Ovary (tissue), 10 donors: ENCODE measurements at regions of chr10 and their contacts with region 1.

Region 1: DNA sequence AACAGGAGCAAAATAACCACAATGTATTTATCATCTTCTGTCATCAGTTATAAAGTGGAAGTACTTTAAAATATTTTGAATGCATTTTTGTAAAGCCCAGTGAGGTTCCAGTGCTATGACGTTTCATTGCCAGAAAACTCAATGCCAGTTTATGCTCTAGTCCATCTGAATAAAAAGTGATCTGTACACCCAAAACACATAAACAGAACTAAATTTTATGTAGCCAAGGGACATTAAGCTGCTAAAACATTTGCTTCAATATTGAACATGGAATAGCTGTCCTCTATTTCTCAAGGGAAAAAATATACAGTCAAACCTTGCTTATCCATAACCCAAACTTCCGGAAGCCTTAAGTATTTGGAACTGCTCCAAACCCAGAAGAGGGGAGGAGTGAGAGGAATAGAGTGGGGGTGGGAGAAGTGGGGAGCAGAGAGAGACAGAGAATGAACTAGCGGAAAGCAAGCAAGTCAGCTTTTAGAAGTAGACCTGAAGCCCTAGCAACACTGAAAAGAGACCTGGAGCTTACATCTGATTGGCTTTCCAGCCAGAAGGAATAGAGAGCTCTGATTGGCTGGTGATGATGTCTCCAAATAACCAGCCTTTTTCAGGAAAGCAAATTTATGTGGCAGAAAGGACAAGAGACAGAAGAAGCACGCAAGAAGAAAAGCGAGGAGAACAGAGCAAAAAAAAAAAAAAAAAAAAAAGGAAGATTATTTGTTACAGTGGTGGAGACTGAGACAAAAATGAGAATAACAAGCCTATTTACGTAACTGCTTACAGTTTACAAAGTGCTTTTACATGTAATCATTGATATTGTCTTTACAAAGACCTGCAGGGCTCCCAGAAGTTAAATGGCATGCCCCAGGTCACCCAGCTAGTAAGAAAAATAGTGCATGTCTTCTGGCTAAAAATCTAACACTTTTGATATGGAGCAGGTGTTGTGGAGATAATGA is 196.0 kb downstream of the RNLS start:
- DNase-seq: peak in 2 of 5 donors; percentile 16 to 30
- H3K4me3 ChIP-seq: no peak overlapping the region
- H3K27ac ChIP-seq: peak overlapping the region in 1 of 2 donors; percentile 4
- H3K4me1 ChIP-seq: peaks cover 5% of the 10 kb centered on the region
- H3K27me3 ChIP-seq: no peaks in the 10 kb centered on the region
- CTCF ChIP-seq: no peak
- EP300 ChIP-seq: no peak
- POLR2A ChIP-seq: no peak

Region 2: DNA sequence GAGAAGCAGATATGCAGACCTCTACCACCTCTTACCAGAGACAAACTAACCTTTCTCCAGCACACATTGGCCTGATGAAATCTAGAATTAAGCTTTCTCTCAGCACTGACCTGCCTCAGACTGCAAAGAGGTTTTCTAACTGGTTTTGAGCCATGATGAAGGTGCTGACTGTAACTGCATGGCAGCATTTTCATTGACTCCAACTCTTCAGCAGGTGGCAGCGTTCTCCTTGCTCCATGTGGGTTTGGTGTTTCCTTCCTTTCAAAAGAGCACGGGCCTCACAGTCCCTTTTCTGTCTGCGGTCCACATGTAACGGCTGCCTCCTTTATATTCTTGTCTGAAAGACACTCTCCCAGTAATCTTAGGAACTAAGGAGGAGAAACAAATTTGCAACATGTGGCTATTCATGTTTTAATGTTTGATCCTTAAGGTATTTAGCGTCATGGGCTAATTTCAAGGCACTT is 536.3 kb before region 1 on chr10:
- intact Hi-C with region 1: loop called in 1 of 4 experiments (anchors 10 kb)
- DNase-seq: peak; percentile 60 to 77 (median 62)
- H3K4me3 ChIP-seq: no peak overlapping the region
- H3K27ac ChIP-seq: no peak overlapping the region
- H3K4me1 ChIP-seq: no peaks in the 10 kb centered on the region
- H3K27me3 ChIP-seq: no peaks in the 10 kb centered on the region
- CTCF ChIP-seq: peak; percentile 33 to 80 (median 64)
- EP300 ChIP-seq: no peak
- POLR2A ChIP-seq: no peak

Region 3: DNA sequence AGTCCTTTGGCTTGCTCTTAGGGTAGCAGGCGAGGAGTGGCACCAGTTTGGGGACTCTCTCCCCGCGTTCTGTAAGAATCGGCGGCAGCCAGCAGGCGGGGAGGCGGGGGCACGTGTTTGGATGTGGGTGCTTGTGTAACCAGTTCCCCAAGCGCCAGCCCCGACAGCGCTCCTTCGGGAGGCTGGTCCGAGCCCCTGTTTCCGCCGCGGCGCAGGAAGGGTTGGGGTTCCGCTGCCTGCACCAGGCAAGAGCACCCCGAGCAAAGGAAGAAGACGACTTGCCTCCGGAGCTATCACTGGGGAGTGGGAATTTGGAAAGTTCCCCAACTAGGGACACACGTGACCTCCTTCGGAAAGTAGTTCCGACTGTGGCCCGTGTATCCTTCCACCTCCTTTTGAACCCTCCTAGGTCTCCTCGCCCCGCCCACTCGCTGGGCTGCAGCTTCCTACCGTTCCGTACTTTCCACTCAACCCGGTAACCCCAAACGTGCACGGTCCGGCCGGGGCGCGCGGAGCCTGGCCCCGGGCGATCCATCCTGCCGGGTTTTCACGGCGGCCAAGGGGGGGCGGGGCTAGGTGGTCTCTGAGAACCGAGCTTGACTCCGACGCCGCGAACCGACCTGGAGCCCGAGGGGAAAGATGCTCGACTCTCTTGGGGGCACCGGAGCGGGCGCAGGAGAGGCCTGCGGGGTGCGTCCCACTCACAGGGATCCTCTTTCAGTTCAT is 525.0 kb before region 1 on chr10:
- intact Hi-C with region 1: loop called in 3 of 4 experiments (anchors 5 to 10 kb)
- DNase-seq: peak; percentile 96 to 97 (median 97)
- H3K4me3 ChIP-seq: peak overlapping the region; percentile 54
- H3K27ac ChIP-seq: peak overlapping the region; percentile 93 to 97
- H3K4me1 ChIP-seq: peaks cover 2% of the 10 kb centered on the region
- H3K27me3 ChIP-seq: no peaks in the 10 kb centered on the region
- CTCF ChIP-seq: no peak
- EP300 ChIP-seq: no peak
- POLR2A ChIP-seq: peak; percentile 46

Region 4: GRCh38 chr10:88318803-88319202 is 68.3 kb before region 1 on chr10:
- intact Hi-C with region 1: no loop called
- DNase-seq: no peak
- H3K4me3 ChIP-seq: no peak overlapping the region
- H3K27ac ChIP-seq: no peak overlapping the region
- H3K4me1 ChIP-seq: no peaks in the 10 kb centered on the region
- H3K27me3 ChIP-seq: no peaks in the 10 kb centered on the region
- CTCF ChIP-seq: no peak
- EP300 ChIP-seq: no peak
- POLR2A ChIP-seq: no peak

Region 5: GRCh38 chr10:88330174-88330573 is 56.9 kb before region 1 on chr10:
- intact Hi-C with region 1: no loop called
- DNase-seq: no peak
- H3K4me3 ChIP-seq: no peak overlapping the region
- H3K27ac ChIP-seq: no peak overlapping the region
- H3K4me1 ChIP-seq: no peaks in the 10 kb centered on the region
- H3K27me3 ChIP-seq: no peaks in the 10 kb centered on the region
- CTCF ChIP-seq: no peak
- EP300 ChIP-seq: no peak
- POLR2A ChIP-seq: no peak

Region 6: GRCh38 chr10:88372051-88372715 is 14.9 kb before region 1 on chr10:
- intact Hi-C with region 1: no loop called
- DNase-seq: no peak
- H3K4me3 ChIP-seq: no peak overlapping the region
- H3K27ac ChIP-seq: no peak overlapping the region
- H3K4me1 ChIP-seq: no peaks in the 10 kb centered on the region
- H3K27me3 ChIP-seq: no peaks in the 10 kb centered on the region
- CTCF ChIP-seq: no peak
- EP300 ChIP-seq: no peak
- POLR2A ChIP-seq: no peak